ENCODE measurements at regions of chr22 and their contacts with region 1.

Region 1: DNA sequence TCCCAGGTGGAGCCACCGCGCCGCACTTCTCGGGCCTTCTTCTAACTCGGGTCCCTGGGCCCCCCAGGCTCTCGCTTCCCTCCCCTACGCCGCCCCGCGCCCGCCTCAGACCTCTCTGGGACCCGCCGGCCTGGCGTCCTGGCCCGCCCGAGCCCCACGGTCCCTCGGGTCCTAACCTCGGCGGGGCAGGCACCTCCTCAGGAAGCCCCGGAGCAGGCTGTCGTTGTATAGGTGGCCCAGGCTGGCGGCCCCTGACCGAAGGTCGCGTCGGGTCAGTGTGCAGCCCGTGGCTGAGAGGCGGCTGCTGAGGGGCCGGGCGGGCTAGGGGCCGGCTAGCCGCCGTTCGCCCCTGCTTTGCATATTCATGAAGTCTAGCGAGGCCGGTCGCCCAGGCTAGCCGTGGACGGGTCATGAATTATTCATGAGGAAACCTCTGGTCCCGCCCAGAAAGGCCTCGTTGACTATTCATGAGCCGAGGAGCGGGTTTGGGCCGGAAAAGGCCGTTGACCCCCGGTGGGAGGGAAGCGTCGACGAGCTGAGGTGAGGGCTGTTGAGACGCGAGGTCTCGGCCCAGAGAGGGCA is at the start of gene HORMAD2:
- DNase-seq: no peak
- ATAC-seq: no peak
- H3K4me3 ChIP-seq: no peak within 1 kb of the TSS
- H3K27ac ChIP-seq: no peak within 1 kb of the TSS
- H3K4me1 ChIP-seq: peaks cover 0 to 4% of the 10 kb centered on the region in 2 experiments; a peak in 2 of 5 replicates
- H3K27me3 ChIP-seq: peaks cover 6 to 8% of the 10 kb centered on the region in 2 experiments; a peak in 4 of 5 replicates
- CTCF ChIP-seq: no peak
- EP300 ChIP-seq: no peak
- POLR2A ChIP-seq: no peak
- RAD21 ChIP-seq: no peak
- polyA plus RNA-seq, gene HORMAD2: not detected

Region 2: GRCh38 chr22:29689880-29690213 is 390.2 kb before region 1 on chr22:
- CTCF ChIA-PET with region 1: no interaction called
- POLR2A ChIA-PET with region 1: no interaction called
- in situ Hi-C with region 1: loop called (anchors 25 kb)
- intact Hi-C with region 1: no loop called
- DNase-seq: peak in 2 of 4 experiments; percentile 43 to 50
- ATAC-seq: peak; percentile 73
- H3K4me3 ChIP-seq: no peak overlapping the region
- H3K27ac ChIP-seq: no peak overlapping the region
- H3K4me1 ChIP-seq: peaks cover 0 to 13% of the 10 kb centered on the region in 2 experiments; a peak in 2 of 5 replicates
- H3K27me3 ChIP-seq: no peaks in the 10 kb centered on the region
- CTCF ChIP-seq: peak; percentile 69 to 78 (median 71)
- EP300 ChIP-seq: no peak
- POLR2A ChIP-seq: no peak
- RAD21 ChIP-seq: peak; percentile 44 to 65

Region 3: GRCh38 chr22:30062950-30063349 is 17.1 kb before region 1 on chr22:
- CTCF ChIA-PET with region 1: no interaction called
- POLR2A ChIA-PET with region 1: no interaction called
- in situ Hi-C with region 1: no loop called
- intact Hi-C with region 1: no loop called
- DNase-seq: no peak
- ATAC-seq: no peak
- H3K4me3 ChIP-seq: no peak overlapping the region
- H3K27ac ChIP-seq: no peak overlapping the region
- H3K4me1 ChIP-seq: no peaks in the 10 kb centered on the region
- H3K27me3 ChIP-seq: no peaks in the 10 kb centered on the region
- CTCF ChIP-seq: no peak
- EP300 ChIP-seq: no peak
- POLR2A ChIP-seq: no peak
- RAD21 ChIP-seq: no peak

Region 4: DNA sequence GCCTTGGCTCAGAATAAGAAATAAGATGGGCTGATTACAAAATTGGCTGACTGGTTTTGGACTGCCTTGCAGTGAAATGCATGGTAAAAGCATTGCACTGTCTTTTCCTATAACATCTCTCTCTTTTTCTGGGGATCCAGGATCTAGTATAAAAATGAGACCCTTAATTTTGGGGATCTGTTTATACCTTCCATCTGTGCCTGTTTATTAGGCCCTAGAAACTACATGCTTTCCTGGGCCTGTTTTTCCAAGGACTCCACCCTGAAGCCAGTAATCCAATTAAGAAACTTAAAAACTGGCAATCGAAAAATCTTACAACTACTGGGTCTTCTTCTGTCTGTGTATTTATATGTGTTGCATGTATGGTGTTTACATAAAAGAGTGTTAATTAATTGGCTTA is 14.8 kb after region 1 on chr22:
- CTCF ChIA-PET with region 1: no interaction called
- POLR2A ChIA-PET with region 1: no interaction called
- in situ Hi-C with region 1: no loop called
- intact Hi-C with region 1: no loop called
- DNase-seq: no peak
- ATAC-seq: no peak
- H3K4me3 ChIP-seq: no peak overlapping the region
- H3K27ac ChIP-seq: no peak overlapping the region
- H3K4me1 ChIP-seq: no peaks in the 10 kb centered on the region; a peak in 1 of 5 replicates
- H3K27me3 ChIP-seq: no peaks in the 10 kb centered on the region
- CTCF ChIP-seq: no peak
- EP300 ChIP-seq: no peak
- POLR2A ChIP-seq: no peak
- RAD21 ChIP-seq: no peak

Region 5: GRCh38 chr22:30212363-30212995 is 132.4 kb after region 1 on chr22:
- CTCF ChIA-PET with region 1: no interaction called
- POLR2A ChIA-PET with region 1: no interaction called
- in situ Hi-C with region 1: no loop called
- intact Hi-C with region 1: no loop called
- DNase-seq: peak in 1 of 4 experiments; percentile 40
- ATAC-seq: no peak
- H3K4me3 ChIP-seq: no peak overlapping the region
- H3K27ac ChIP-seq: no peak overlapping the region
- H3K4me1 ChIP-seq: peaks cover 36 to 48% of the 10 kb centered on the region in 2 experiments
- H3K27me3 ChIP-seq: no peaks in the 10 kb centered on the region
- CTCF ChIP-seq: no peak
- EP300 ChIP-seq: no peak
- POLR2A ChIP-seq: no peak
- RAD21 ChIP-seq: no peak